ENCODE measurements at regions of chr6 and their contacts with region 1.

Region 1: GRCh38 chr6:75296811-75297779 is 12.5 kb upstream of the TMEM30A start:
- DNase-seq: peak; percentile 85
- H3K4me3 ChIP-seq: no peak overlapping the region
- H3K27ac ChIP-seq: no peak overlapping the region
- H3K4me1 ChIP-seq: no peaks in the 10 kb centered on the region
- H3K27me3 ChIP-seq: no peaks in the 10 kb centered on the region
- CTCF ChIP-seq: peak; percentile 25 to 35
- POLR2A ChIP-seq: no peak

Region 2: DNA sequence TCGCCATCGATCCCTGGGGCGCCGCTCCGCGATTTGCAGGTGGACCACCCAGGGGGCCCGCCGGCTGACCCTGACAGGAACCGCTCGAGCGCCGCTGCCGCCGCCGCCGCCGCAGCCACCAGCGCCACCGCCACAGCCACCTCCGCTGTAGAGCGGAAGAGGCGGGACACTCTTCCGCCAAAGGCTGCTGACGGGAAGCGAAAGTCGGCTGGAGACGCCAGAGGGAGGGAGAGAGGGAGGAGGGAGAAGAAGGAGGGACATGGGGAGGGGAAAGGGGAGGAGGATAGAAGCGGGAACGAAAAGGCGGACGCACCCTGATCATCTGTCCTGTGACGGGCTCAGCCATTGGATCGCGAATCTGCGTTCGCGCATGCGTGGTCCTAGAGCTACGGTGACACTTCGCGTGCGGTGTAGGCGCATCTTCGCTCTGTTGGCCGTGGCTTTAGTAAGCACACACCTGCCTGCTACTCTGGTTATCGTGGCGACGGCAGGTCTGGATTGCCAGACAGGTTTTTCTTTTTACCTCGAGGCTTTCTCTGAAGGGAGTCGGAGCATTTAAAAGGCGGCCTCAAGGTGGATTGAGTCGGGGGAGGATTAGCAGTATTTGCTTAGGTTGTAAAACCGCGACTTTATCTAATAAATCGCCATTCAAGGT is 12.3 kb before region 1 on chr6 and contains the start of gene TMEM30A:
- CTCF ChIA-PET with region 1: interaction called, 7 read pairs
- POLR2A ChIA-PET with region 1: interaction called, 3 read pairs
- dilution Hi-C with region 1: no loop called
- intact Hi-C with region 1: loop called (anchors 1 kb)
- DNase-seq: peak; percentile 99
- H3K4me3 ChIP-seq: peak within 1 kb of the TSS; percentile 91 to 95 (median 94)
- H3K27ac ChIP-seq: peak within 1 kb of the TSS; percentile 84
- H3K4me1 ChIP-seq: peaks cover 27% of the 10 kb centered on the region
- H3K27me3 ChIP-seq: no peaks in the 10 kb centered on the region
- CTCF ChIP-seq: no peak
- POLR2A ChIP-seq: peak; percentile 95
- total RNA-seq, gene TMEM30A: 197 and 213 TPM in 2 replicates

Region 3: GRCh38 chr6:75349262-75349984 is 52.3 kb after region 1 on chr6:
- CTCF ChIA-PET with region 1: interaction called, 8 read pairs
- POLR2A ChIA-PET with region 1: interaction called, 3 read pairs
- dilution Hi-C with region 1: no loop called
- intact Hi-C with region 1: loop called (anchors 5 kb)
- DNase-seq: peak; percentile 88
- H3K4me3 ChIP-seq: peak overlapping the region; percentile 8 to 56 (median 13)
- H3K27ac ChIP-seq: peak overlapping the region; percentile 6
- H3K4me1 ChIP-seq: peaks cover 13% of the 10 kb centered on the region
- H3K27me3 ChIP-seq: no peaks in the 10 kb centered on the region
- CTCF ChIP-seq: peak; percentile 11 to 43
- POLR2A ChIP-seq: no peak

Region 4: DNA sequence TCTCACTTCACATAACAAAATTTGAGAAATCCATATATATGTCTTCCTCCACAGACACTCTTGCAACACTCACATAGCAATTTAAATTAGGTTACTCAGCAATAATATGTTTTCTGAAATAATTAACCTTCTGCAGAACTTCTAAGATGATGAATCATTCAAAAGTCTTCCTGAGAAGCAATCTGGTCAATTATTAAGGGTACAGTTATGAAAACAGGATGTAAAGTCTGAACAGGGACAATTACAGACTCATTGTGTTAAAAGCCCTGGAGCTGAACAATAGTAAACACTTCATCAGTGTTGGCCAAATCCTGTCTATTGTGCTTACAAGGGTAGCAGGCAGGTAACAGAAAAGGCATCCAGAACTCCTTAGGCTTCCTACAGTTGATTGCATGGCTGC is 121.1 kb after region 1 on chr6:
- CTCF ChIA-PET with region 1: interaction called, 9 read pairs
- POLR2A ChIA-PET with region 1: no interaction called
- dilution Hi-C with region 1: no loop called
- intact Hi-C with region 1: loop called (anchors 5 kb)
- DNase-seq: peak; percentile 94
- H3K4me3 ChIP-seq: no peak overlapping the region
- H3K27ac ChIP-seq: peak overlapping the region; percentile 81
- H3K4me1 ChIP-seq: peaks cover 48% of the 10 kb centered on the region
- H3K27me3 ChIP-seq: no peaks in the 10 kb centered on the region
- CTCF ChIP-seq: no peak
- POLR2A ChIP-seq: peak; percentile 17

Region 5: DNA sequence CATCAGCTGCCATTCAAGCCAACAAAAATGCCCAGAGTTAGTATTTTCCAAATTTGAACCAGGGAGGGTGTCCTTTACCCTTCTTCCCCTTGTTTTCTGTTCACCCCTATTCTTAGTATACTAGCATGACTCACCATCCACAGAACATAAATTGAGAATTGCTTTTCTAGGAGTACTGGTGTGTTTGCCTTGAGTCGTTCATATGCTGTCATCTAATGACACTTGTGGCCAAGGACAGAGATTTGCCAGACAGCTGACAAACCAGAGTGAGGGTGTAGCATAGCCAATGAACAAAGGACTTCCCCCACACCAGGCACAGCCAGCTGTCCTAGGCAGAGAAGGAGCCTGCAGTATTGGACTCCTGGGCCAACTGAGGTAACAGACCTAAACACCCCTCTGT is 134.3 kb after region 1 on chr6:
- CTCF ChIA-PET with region 1: no interaction called
- POLR2A ChIA-PET with region 1: no interaction called
- dilution Hi-C with region 1: no loop called
- intact Hi-C with region 1: no loop called
- DNase-seq: peak; percentile 77
- H3K4me3 ChIP-seq: no peak overlapping the region
- H3K27ac ChIP-seq: peak overlapping the region; percentile 15
- H3K4me1 ChIP-seq: peaks cover 10% of the 10 kb centered on the region
- H3K27me3 ChIP-seq: no peaks in the 10 kb centered on the region
- CTCF ChIP-seq: no peak
- POLR2A ChIP-seq: no peak

Region 6: DNA sequence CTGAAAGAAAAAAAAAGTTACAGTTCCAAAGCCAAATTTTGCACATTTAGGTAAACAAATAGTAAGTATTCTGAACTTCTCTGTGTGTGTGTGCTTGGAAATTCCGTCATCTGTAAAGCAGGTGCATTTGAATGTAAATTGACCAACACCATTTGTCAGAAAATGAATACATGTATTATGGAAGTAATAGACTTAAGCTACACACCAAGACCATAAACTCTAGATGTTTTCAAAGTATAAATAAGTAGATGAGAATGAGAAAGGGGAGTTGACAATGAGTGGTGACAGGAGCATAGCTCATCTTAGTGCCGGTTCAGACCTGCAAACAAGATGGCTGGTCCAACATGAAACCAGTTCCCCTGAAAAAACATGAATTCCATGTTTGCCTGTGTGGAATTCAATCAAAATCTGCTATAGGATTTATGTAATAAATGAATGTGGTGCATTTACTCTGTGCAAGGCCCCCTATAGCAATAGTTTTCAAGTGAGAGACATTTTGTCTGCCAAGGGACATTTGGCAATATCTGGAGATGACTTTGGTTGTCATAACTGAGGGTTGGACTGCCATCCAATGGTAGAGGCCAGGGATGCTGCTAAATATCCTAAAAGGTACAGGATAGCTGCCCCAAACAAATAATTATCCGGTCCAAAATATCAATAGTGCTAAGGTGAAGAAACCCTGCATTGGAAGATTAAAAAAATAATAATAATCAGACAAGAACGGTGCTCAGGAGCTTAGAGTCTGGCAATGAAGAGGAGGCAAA is 207.6 kb after region 1 on chr6:
- CTCF ChIA-PET with region 1: interaction called, 20 read pairs
- POLR2A ChIA-PET with region 1: no interaction called
- dilution Hi-C with region 1: no loop called
- intact Hi-C with region 1: no loop called
- DNase-seq: no peak
- H3K4me3 ChIP-seq: no peak overlapping the region
- H3K27ac ChIP-seq: no peak overlapping the region
- H3K4me1 ChIP-seq: peaks cover 27% of the 10 kb centered on the region
- H3K27me3 ChIP-seq: no peaks in the 10 kb centered on the region
- CTCF ChIP-seq: peak in 1 of 2 donors; percentile 15
- POLR2A ChIP-seq: no peak

Region 7: DNA sequence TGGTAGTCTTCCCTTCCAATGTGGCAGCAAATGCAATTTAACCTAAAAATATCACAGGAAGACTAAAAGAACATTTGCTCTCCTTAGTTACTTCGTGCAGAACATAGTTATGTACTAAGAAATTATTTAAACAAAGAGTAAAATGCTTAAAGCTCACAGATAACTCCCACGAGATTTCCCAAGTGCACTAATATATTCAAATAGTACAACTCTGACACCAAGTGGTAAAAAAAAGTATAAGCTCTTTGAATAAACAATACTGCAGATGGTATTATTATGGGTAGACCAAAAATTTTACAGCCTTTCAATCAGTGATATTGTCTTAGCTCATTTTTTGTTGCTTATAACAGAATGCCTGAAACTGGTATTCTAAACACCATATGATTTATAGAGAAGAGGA is 249.3 kb after region 1 on chr6:
- CTCF ChIA-PET with region 1: interaction called, 12 read pairs
- POLR2A ChIA-PET with region 1: no interaction called
- dilution Hi-C with region 1: loop called (anchors 25 kb)
- intact Hi-C with region 1: loop called (anchors 1 kb)
- DNase-seq: peak; percentile 38
- H3K4me3 ChIP-seq: no peak overlapping the region
- H3K27ac ChIP-seq: no peak overlapping the region
- H3K4me1 ChIP-seq: no peaks in the 10 kb centered on the region
- H3K27me3 ChIP-seq: no peaks in the 10 kb centered on the region
- CTCF ChIP-seq: no peak
- POLR2A ChIP-seq: no peak

Measured in endothelial cell of umbilical vein (primary cell).